ENCODE measurements at regions of chr2 and their contacts with region 1.

Region 1: GRCh38 chr2:229901819-229902218 is 20.0 kb downstream of the TRIP12 start:
- DNase-seq: no peak
- ATAC-seq: peak; percentile 41 to 77

Region 2: GRCh38 chr2:229852565-229852964 is 49.3 kb before region 1 on chr2:
- intact Hi-C with region 1: loop called in 1 of 2 experiments (anchors 10 kb)
- DNase-seq: peak; percentile 53
- ATAC-seq: peak; percentile 74 to 81

Measured in left cardiac atrium (tissue), 4 donors.